Head of caudate nucleus (tissue), 42 donors: ENCODE measurements at regions of chr1 and their contacts with region 1.

Region 1: GRCh38 chr1:75785983-75786853 is at the start of gene RABGGTB:
- DNase-seq: peak; percentile 91 to 98 (median 95)

Region 2: GRCh38 chr1:75724472-75725022 is 61.7 kb before region 1 on chr1 and contains the start of gene ACADM:
- intact Hi-C with region 1: loop called (anchors 2 kb)
- DNase-seq: peak; percentile 75 to 96 (median 92)